Brain microvascular endothelial cell (primary cell): ENCODE measurements at regions of chr2 and their contacts with region 1.

Region 1: GRCh38 chr2:203484266-203485112 is 50.6 kb downstream of the RAPH1 start:
- DNase-seq: no peak
- H3K4me3 ChIP-seq: no peak overlapping the region
- H3K27ac ChIP-seq: no peak overlapping the region
- H3K27me3 ChIP-seq: no peaks in the 10 kb centered on the region
- CTCF ChIP-seq: peak; percentile 64

Region 2: DNA sequence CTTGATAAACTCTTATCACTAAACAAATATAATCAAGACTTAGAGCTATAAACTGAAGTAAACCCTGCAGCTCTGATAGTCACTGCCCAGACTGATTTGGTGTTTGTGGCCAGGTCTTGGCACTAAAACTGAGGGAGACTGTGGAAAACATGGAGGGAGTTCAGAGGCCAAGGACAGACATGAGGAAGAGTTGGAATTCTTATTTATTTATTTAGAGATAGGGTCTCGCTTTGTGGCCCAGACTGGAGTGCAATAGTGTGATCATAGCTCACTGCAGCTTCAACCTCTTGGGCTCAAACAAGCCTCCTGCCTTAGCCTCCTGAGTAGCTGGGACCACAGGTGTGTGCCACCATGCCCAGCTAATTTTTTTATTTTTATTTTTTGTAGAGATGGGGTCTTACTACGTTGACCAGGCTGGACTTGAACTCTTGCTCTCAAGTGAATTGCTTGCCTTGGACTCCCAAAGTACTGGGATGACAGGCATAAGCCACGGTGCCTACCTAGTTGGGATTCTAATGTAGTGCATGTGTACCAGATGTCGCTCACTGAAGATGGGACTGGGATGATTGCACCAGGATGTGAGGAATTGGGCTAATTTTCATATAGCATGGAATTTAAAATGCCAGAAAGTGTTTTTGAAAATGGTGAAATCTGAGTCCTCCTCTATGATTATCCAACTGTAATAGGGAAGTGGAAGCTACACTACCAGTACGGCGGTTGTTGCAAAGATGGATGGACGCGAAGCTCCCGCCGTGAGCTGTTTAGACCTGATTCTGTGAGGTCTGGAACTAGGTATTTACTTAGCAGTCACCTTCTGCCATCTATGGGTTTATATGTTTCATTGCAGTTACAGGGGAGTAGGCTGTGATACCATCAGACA is 330.4 kb after region 1 on chr2:
- in situ Hi-C with region 1: loop called (anchors 25 kb)
- DNase-seq: peak; percentile 77
- H3K4me3 ChIP-seq: no peak overlapping the region
- H3K27ac ChIP-seq: no peak overlapping the region
- H3K27me3 ChIP-seq: no peaks in the 10 kb centered on the region
- CTCF ChIP-seq: peak; percentile 68

Region 3: DNA sequence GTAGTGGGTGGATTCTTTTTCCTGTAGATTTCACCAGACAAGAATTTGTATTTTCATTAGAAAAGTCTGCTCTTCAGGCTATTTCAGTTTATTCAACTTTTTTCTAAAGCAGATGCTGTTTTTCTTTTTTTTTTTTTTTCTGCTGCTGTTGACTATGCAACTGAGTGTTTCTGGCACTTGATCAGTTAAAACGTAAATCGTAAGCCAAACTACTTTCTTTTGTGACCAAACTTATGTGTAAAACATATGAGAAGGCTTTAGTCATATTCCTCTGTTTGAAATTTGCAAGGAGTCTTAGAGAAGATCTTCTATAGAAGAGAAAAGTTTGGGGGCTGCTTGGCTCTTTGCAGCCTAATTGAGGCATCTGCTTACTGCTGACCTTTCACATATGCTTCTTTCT is 1230.9 kb after region 1 on chr2:
- in situ Hi-C with region 1: no loop called
- DNase-seq: no peak
- H3K4me3 ChIP-seq: no peak overlapping the region
- H3K27ac ChIP-seq: no peak overlapping the region
- H3K27me3 ChIP-seq: no peaks in the 10 kb centered on the region
- CTCF ChIP-seq: no peak